ENCODE measurements at regions of chr7 and their contacts with region 1.

Region 1: GRCh38 chr7:5574770-5575269 is 151.2 kb upstream of the TNRC18 start:
- DNase-seq: no peak
- ATAC-seq: no peak
- H3K4me3 ChIP-seq: no peak overlapping the region
- H3K27ac ChIP-seq: no peak overlapping the region
- H3K4me1 ChIP-seq: no peaks in the 10 kb centered on the region
- H3K27me3 ChIP-seq: no peaks in the 10 kb centered on the region
- CTCF ChIP-seq: no peak

Region 2: GRCh38 chr7:5532520-5533335 is 42.1 kb before region 1 on chr7:
- CTCF ChIA-PET with region 1: no interaction called
- POLR2A ChIA-PET with region 1: no interaction called
- in situ Hi-C with region 1: no loop called
- intact Hi-C with region 1: no loop called
- DNase-seq: no peak
- ATAC-seq: peak; percentile 10; the same call in 1 of the 2 replicates
- H3K4me3 ChIP-seq: no peak overlapping the region
- H3K27ac ChIP-seq: peak overlapping the region; percentile 98
- H3K4me1 ChIP-seq: peaks cover 30% of the 10 kb centered on the region
- H3K27me3 ChIP-seq: no peaks in the 10 kb centered on the region
- CTCF ChIP-seq: no peak

Region 3: GRCh38 chr7:5629941-5630340 is 55.1 kb after region 1 on chr7:
- CTCF ChIA-PET with region 1: interaction called, 10 read pairs
- POLR2A ChIA-PET with region 1: no interaction called
- in situ Hi-C with region 1: no loop called
- intact Hi-C with region 1: no loop called
- DNase-seq: no peak
- ATAC-seq: peak; percentile 74
- H3K4me3 ChIP-seq: no peak overlapping the region
- H3K27ac ChIP-seq: no peak overlapping the region
- H3K4me1 ChIP-seq: no peaks in the 10 kb centered on the region
- H3K27me3 ChIP-seq: no peaks in the 10 kb centered on the region
- CTCF ChIP-seq: no peak

Measured in Panc1 (cell line).